ENCODE measurements at regions of chr6 and their contacts with region 1.

Region 1: DNA sequence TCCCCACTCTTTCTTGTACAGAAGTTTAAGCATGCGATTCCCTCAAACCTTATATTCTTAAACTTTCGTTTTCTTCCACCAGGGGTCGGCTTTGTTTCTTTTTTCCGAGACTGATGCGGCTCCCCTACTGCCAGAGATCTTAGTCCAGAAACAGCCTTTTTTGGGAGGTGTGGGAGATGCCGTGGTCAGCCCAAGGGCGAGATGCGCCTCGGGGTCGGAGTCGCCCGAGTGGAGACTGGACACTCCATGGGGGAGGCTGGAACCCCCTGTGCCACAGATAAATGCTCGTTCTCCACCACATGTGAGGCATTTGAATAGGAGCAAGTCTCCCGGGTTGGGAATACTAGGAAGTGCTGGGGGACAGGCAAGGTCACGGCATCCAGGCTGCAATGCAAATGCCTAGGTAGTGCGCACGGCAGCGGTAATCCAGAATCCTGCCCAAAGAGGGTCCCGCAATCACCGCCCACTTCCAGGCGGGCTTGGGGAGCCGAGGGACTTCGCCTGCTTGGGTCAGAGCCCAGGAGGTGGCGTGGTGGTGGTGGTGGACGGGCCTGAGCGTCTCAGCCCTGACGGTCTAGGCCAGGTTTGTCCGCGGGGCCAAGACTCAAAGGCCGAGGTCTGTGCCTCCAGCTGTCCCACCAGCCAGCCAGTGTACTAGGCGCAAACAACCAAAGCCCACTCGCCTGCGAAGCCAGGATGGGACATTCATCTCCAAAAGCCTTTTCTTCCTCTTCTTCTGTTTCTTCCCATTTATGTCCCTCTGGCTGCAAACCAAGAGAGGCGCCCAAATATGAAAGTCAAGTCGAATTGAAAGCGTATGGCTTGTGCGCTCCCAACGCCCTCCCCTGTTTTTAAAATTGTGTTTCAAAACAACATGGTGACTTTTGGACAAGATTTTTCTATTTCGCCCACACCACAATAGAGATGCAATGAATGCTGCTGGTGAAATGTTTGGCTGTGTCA is 39.3 kb upstream of the OSTM1 start:
- DNase-seq: peak; percentile 78
- H3K4me3 ChIP-seq: peak overlapping the region in 1 of 2 experiments; percentile 31; a peak in 1 of 4 replicates
- H3K27ac ChIP-seq: no peak overlapping the region
- H3K4me1 ChIP-seq: peaks cover 0 to 32% of the 10 kb centered on the region in 2 experiments; a peak in 2 of 4 replicates
- H3K27me3 ChIP-seq: peaks cover 35% of the 10 kb centered on the region
- CTCF ChIP-seq: peak; percentile 69
- EP300 ChIP-seq: no peak
- RAD21 ChIP-seq: peak; percentile 87

Region 2: DNA sequence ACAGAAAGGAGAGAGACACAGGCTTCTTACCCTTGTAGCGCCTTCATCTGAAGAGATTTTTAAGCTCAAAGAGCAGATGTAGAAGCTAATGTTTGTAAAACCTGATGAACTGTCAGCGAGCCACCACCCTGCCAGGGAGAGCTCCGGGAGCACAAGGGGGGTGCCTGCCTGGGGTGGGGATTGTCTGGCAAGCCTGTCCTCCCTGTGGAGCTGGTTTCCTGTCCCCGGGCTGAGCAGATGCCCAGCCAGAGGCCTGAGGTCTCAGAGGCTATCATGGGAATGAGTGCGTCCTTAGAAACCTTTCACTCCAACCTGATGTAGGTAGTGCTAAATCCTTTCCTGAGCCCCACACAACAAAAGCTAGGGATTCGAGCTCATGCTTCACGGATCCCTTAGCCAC is 10.1 kb after region 1 on chr6:
- CTCF ChIA-PET with region 1: interaction called, 12 read pairs
- POLR2A ChIA-PET with region 1: no interaction called
- DNase-seq: peak; percentile 60
- H3K4me3 ChIP-seq: no peak overlapping the region
- H3K27ac ChIP-seq: no peak overlapping the region
- H3K4me1 ChIP-seq: peaks cover 0 to 5% of the 10 kb centered on the region in 2 experiments; a peak in 2 of 4 replicates
- H3K27me3 ChIP-seq: peaks cover 5% of the 10 kb centered on the region; the same call in 1 of the 2 replicates
- CTCF ChIP-seq: no peak
- EP300 ChIP-seq: no peak
- RAD21 ChIP-seq: no peak

Region 3: GRCh38 chr6:108492131-108492766 is 378.4 kb after region 1 on chr6:
- CTCF ChIA-PET with region 1: interaction called, 111 read pairs
- POLR2A ChIA-PET with region 1: no interaction called
- DNase-seq: peak; percentile 39
- H3K4me3 ChIP-seq: no peak overlapping the region
- H3K27ac ChIP-seq: no peak overlapping the region
- H3K4me1 ChIP-seq: no peaks in the 10 kb centered on the region
- H3K27me3 ChIP-seq: no peaks in the 10 kb centered on the region
- CTCF ChIP-seq: peak; percentile 74
- EP300 ChIP-seq: no peak
- RAD21 ChIP-seq: peak; percentile 86

Region 4: DNA sequence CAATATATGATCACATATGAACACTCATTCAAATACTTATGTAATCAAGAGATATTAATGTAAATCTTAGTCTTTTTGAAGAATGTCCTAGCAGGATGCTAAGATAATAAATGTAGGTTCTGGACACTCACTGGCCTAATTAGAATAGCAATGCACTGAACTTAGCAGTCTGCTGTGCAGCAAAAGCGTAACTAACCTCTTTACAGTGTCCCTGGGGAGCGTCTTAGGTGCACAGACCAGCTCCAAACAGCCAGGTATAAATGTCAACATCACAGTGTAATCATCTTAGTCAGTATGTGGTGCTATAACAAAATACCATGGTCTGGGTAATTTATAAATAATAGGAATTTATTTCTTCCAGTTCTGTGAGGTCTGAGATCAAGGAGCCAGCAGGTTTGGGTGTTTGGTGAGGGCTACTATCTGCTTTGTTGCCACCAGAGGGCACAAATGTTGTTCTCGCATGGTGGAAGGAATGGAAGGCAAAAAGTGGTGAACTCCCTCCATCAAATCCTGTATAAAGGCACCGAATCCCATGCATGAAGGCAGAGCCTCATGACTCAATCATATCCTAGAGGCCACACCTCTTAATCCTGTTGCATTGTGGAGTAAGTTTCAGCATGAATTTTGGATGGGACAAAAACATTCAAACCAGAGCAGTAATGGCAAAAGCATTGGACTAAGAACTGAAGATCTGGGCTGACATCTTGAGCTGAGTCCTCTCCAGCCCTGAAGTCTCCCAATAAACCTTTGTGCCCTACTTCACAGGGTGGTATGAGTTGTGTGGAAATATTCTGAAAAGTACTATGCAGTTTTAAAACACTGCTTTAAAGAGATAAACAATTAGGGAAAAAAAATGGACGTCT is 405.1 kb after region 1 on chr6:
- CTCF ChIA-PET with region 1: interaction called, 16 read pairs
- POLR2A ChIA-PET with region 1: no interaction called
- DNase-seq: peak; percentile 30
- H3K4me3 ChIP-seq: no peak overlapping the region; a peak in 1 of 4 replicates
- H3K27ac ChIP-seq: no peak overlapping the region
- H3K4me1 ChIP-seq: no peaks in the 10 kb centered on the region
- H3K27me3 ChIP-seq: no peaks in the 10 kb centered on the region
- CTCF ChIP-seq: peak; percentile 56
- EP300 ChIP-seq: no peak
- RAD21 ChIP-seq: peak; percentile 41; the same call in 1 of the 2 replicates

Region 5: GRCh38 chr6:108526739-108527174 is 412.9 kb after region 1 on chr6:
- CTCF ChIA-PET with region 1: interaction called, 32 read pairs
- POLR2A ChIA-PET with region 1: no interaction called
- DNase-seq: peak; percentile 64
- H3K4me3 ChIP-seq: no peak overlapping the region; a peak in 1 of 4 replicates
- H3K27ac ChIP-seq: no peak overlapping the region
- H3K4me1 ChIP-seq: no peaks in the 10 kb centered on the region; a peak in 1 of 4 replicates
- H3K27me3 ChIP-seq: no peaks in the 10 kb centered on the region
- CTCF ChIP-seq: peak; percentile 84
- EP300 ChIP-seq: no peak
- RAD21 ChIP-seq: peak; percentile 95

Measured in SK-N-SH (cell line).